Posterior vena cava (tissue), 2 donors: ENCODE measurements at regions of chr13 and their contacts with region 1.

Region 1: DNA sequence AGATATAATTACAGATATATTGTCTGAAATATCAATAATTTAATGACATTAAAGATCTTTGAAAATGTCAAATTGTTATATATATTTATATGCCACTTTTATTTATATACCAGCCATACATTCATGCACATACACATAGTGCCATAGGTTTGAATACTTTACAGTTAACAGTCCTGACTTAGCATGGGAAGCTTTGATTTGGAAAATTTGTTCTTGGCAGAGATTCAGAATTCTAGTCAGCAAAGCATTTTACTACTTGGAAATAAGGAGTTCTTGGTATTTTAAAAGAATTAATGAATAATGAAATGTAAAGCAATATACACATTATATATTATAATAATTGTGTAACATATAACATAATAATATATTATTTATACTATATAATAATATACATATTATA is 277.0 kb upstream of the PCDH20 start:
- DNase-seq: no peak

Region 2: GRCh38 chr13:62088165-62088564 is 395.5 kb after region 1 on chr13:
- intact Hi-C with region 1: no loop called
- DNase-seq: no peak

Region 3: DNA sequence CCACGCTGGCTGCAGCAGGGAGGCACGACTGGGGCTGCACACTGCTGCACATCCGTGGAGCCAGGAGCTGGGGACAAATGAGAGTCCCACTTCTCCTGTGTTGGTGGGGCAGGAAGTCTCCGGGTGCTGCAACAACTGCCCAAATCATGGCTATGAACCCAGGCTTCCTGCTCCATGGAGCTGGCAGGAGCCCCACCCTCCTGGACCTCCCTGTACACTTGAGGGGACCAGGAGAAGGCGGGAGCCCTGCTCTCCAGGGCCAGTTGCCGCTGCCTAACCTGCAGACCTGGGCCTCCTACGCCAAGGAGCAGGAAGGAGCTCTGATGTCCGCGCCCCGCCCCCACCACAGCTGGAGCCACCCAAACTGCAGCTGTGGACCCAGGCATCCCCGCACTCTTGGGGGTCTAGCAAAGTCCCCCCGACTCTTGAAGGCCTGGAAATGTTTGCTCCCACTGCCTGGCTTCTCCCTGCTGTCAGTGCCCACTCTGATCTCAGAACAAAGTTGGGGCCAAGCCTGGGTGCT is 475.0 kb after region 1 on chr13:
- intact Hi-C with region 1: loop called in 1 of 2 experiments (anchors 5 kb)
- DNase-seq: no peak